Calu3 (cell line): ENCODE measurements at regions of chr20 and their contacts with region 1.

Region 1: DNA sequence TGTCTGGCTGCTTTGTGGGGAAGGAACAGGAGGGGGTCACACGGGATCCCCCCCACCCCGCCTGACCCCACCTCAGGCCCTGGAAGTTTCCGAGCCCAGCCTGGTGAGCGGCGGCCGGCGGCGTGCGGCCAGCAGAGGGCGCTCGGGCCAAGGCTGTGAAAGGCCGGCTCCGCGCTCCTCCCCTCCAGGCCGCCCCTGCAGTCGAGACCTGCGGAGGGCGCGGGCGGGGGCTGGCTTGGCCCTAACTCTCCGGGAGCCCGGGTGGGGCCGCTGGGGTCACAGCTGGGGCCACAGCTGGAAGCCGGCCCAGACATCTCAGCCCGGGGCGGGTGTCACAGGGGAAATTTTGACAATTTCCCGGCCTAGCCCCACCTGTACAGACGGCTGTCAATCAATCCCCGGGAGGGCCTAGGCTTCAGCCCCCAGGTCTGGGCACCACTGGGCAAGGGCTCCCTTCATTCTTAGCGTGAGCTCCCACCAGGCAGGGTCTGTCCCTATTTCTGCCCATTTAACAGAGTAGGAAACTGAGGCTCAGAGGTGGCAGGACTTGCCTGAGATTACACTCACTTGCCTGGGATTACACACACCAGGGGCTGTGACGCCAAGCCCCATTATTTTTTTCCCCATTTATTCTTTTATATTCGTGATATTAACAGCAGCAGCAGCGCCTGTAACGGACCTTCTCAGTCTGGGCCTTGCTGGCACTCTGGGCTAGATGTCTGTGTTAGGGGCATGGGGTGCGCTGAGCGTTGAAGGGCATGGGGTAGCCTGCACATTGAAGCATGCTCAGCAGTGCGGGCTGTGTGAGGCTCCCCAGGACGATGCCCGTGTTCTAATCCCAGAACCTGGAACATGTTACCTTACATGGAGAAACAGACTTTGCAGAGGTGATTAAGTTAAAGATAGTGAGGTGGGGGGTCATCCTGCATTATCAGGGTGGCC is 23.0 kb downstream of the ZBP1 start:
- DNase-seq: peak; percentile 90
- H3K4me3 Mint-ChIP-seq: peak overlapping the region; percentile 28
- H3K27ac Mint-ChIP-seq: no peak overlapping the region
- H3K4me1 Mint-ChIP-seq: peaks cover 29% of the 10 kb centered on the region
- H3K27me3 Mint-ChIP-seq: peaks cover 20% of the 10 kb centered on the region
- CTCF ChIP-seq: peak; percentile 96

Region 2: DNA sequence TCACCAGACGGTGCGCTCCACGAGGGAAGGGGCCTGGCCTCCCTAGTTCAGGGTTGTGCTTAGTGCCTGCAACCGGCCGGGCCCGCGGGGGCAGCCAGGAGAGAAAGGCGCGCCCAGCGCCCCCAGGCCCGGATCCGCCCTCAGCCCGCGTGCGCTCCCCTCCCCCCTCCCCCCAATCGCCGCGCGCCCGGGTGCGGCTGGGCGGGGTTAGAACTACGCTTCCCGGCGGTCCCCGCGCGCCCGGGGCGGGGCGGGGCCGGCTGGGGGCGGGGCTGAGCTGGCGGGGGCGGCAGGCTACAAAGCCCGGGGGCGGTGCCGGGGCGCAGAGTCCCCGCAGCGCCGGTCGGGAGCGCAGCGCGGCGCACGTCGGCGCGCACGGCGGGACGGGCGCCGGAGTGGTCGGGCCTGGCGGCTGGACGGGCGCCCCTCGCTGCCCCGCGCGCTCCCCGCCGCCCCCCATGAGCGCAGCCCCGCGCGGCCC is 206.2 kb before region 1 on chr20 and contains the start of gene RBM38:
- CTCF ChIA-PET with region 1: no interaction called
- intact Hi-C with region 1: loop called (anchors 10 kb)
- DNase-seq: peak; percentile 86
- H3K4me3 Mint-ChIP-seq: peak within 1 kb of the TSS; percentile 67
- H3K27ac Mint-ChIP-seq: peak within 1 kb of the TSS; percentile 47
- H3K4me1 Mint-ChIP-seq: no peaks in the 10 kb centered on the region
- H3K27me3 Mint-ChIP-seq: no peaks in the 10 kb centered on the region
- CTCF ChIP-seq: no peak
- total RNA-seq, gene RBM38: 29.5 and 32.0 TPM in 2 replicates

Region 3: GRCh38 chr20:57514273-57514751 is 83.0 kb before region 1 on chr20:
- CTCF ChIA-PET with region 1: interaction called, 18 read pairs
- intact Hi-C with region 1: loop called (anchors 1 kb)
- DNase-seq: peak; percentile 79
- H3K4me3 Mint-ChIP-seq: no peak overlapping the region
- H3K27ac Mint-ChIP-seq: no peak overlapping the region
- H3K4me1 Mint-ChIP-seq: no peaks in the 10 kb centered on the region
- H3K27me3 Mint-ChIP-seq: peaks cover 55% of the 10 kb centered on the region
- CTCF ChIP-seq: peak; percentile 82

Region 4: GRCh38 chr20:57638173-57638894 is 41.1 kb after region 1 on chr20:
- CTCF ChIA-PET with region 1: no interaction called
- intact Hi-C with region 1: no loop called
- DNase-seq: no peak
- H3K4me3 Mint-ChIP-seq: no peak overlapping the region
- H3K27ac Mint-ChIP-seq: no peak overlapping the region
- H3K4me1 Mint-ChIP-seq: peaks cover 15% of the 10 kb centered on the region
- H3K27me3 Mint-ChIP-seq: no peaks in the 10 kb centered on the region
- CTCF ChIP-seq: no peak

Region 5: GRCh38 chr20:58209652-58210397 is 612.6 kb after region 1 on chr20:
- CTCF ChIA-PET with region 1: interaction called, 7 read pairs
- intact Hi-C with region 1: loop called (anchors 1 kb)
- DNase-seq: peak; percentile 96
- H3K4me3 Mint-ChIP-seq: peak overlapping the region; percentile 51
- H3K27ac Mint-ChIP-seq: peak overlapping the region; percentile 52
- H3K4me1 Mint-ChIP-seq: peaks cover 17% of the 10 kb centered on the region
- H3K27me3 Mint-ChIP-seq: peaks cover 47% of the 10 kb centered on the region
- CTCF ChIP-seq: peak; percentile 100